ENCODE measurements at regions of chr17 and their contacts with region 1.

Region 1: DNA sequence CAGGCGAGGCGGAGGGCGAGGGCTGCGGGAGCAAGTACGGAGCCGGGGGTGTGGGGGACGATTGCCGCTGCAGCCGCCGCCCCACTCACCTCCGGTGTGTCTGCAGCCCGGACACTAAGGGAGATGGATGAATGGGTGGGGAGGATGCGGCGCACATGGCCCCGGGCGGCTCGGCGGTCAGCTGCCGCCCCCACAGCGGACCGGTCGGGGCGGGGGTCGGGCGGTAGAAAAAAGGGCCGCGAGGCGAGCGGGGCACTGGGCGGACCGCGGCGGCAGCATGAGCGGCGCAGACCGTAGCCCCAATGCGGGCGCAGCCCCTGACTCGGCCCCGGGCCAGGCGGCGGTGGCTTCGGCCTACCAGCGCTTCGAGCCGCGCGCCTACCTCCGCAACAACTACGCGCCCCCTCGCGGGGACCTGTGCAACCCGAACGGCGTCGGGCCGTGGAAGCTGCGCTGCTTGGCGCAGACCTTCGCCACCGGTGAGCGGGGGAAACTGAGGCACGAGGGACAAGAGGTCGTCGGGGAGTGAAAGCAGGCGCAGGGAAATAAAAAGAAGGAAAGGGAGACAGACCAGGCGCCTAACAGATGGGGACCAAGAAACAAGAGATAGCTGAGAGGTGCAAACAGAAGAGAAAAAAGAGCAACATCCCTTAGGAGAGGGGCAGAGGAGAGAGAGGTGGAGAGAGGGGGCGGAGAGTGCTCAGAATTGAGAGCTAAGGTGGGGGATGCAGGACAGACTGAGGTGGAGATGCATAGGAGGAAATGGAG is at the start of gene PNMT:
- DNase-seq: peak; percentile 37 to 84 (median 68)
- ATAC-seq: peak; percentile 79
- H3K4me3 ChIP-seq: peak within 1 kb of the TSS; percentile 29 to 50
- H3K4me3 Mint-ChIP-seq: peak within 1 kb of the TSS; percentile 79
- H3K27ac ChIP-seq: no peak within 1 kb of the TSS
- H3K27ac Mint-ChIP-seq: no peak within 1 kb of the TSS
- H3K4me1 ChIP-seq: peaks cover 26% of the 10 kb centered on the region
- H3K4me1 Mint-ChIP-seq: peaks cover 25% of the 10 kb centered on the region
- H3K27me3 ChIP-seq: peaks cover 0 to 2% of the 10 kb centered on the region in 2 experiments
- H3K27me3 Mint-ChIP-seq: peaks cover 12% of the 10 kb centered on the region
- CTCF ChIP-seq: peak; percentile 72
- total RNA-seq, gene PNMT: 0.43 TPM in 1 of 2 experiments, not detected in the other

Region 2: GRCh38 chr17:39631403-39631802 is 37.0 kb before region 1 on chr17:
- CTCF ChIA-PET with region 1: interaction called, 205 read pairs
- POLR2A ChIA-PET with region 1: interaction called, 3 read pairs
- intact Hi-C with region 1: no loop called
- DNase-seq: no peak
- ATAC-seq: no peak
- H3K4me3 ChIP-seq: no peak overlapping the region
- H3K4me3 Mint-ChIP-seq: no peak overlapping the region
- H3K27ac ChIP-seq: no peak overlapping the region
- H3K27ac Mint-ChIP-seq: no peak overlapping the region
- H3K4me1 ChIP-seq: peaks cover 13% of the 10 kb centered on the region
- H3K4me1 Mint-ChIP-seq: peaks cover 32% of the 10 kb centered on the region
- H3K27me3 ChIP-seq: peaks cover 6 to 15% of the 10 kb centered on the region in 2 experiments
- H3K27me3 Mint-ChIP-seq: peaks cover 26% of the 10 kb centered on the region
- CTCF ChIP-seq: no peak

Region 3: DNA sequence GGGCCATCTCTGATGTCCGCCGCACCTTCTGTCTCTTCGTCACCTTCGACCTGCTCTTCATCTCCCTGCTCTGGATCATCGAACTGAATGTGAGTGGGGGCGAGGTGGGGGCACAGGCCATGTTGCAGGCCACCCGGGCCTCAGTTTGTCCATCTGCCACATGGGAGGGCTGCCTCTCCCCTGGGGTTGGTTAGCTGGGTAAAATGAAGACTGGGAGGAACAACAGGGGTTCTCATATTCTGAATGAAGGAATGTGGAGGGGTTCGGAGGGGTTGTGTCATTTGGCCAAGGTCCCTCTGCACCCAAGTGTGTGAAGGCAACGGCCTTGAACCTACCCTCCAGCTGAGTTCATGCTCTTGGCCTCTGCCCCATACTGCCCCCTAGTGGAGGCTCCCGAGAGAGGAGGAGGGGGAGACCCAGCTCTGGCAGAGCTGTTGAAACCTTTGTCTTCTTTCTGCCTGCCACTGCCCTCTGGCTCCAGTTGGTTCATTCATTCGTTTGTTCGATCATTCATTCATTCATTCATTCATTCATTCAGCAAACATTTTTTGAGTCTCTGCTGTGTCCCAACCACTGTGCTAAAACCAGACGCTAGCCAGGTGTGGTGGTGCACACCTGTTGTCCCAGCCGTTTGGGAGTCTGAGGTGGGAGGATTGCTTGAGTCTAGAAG is 14.6 kb before region 1 on chr17:
- CTCF ChIA-PET with region 1: interaction called, 97 read pairs
- POLR2A ChIA-PET with region 1: interaction called, 9 read pairs
- intact Hi-C with region 1: no loop called
- DNase-seq: peak; percentile 64 to 88 (median 81)
- ATAC-seq: peak; percentile 82
- H3K4me3 ChIP-seq: no peak overlapping the region
- H3K4me3 Mint-ChIP-seq: no peak overlapping the region
- H3K27ac ChIP-seq: no peak overlapping the region
- H3K27ac Mint-ChIP-seq: no peak overlapping the region
- H3K4me1 ChIP-seq: peaks cover 41% of the 10 kb centered on the region
- H3K4me1 Mint-ChIP-seq: peaks cover 60% of the 10 kb centered on the region
- H3K27me3 ChIP-seq: no peaks in the 10 kb centered on the region
- H3K27me3 Mint-ChIP-seq: no peaks in the 10 kb centered on the region
- CTCF ChIP-seq: peak; percentile 83

Region 4: GRCh38 chr17:39687811-39688518 is 19.6 kb after region 1 on chr17 and contains the start of gene PGAP3:
- CTCF ChIA-PET with region 1: interaction called, 13 read pairs
- POLR2A ChIA-PET with region 1: interaction called, 6 read pairs
- intact Hi-C with region 1: no loop called
- DNase-seq: peak; percentile 54 to 92 (median 85)
- ATAC-seq: peak; percentile 93
- H3K4me3 ChIP-seq: peak within 1 kb of the TSS; percentile 68 to 85
- H3K4me3 Mint-ChIP-seq: peak within 1 kb of the TSS; percentile 97
- H3K27ac ChIP-seq: peak within 1 kb of the TSS; percentile 80 to 86
- H3K27ac Mint-ChIP-seq: peak within 1 kb of the TSS; percentile 98
- H3K4me1 ChIP-seq: peaks cover 17% of the 10 kb centered on the region
- H3K4me1 Mint-ChIP-seq: peaks cover 27% of the 10 kb centered on the region
- H3K27me3 ChIP-seq: peaks cover 0 to 2% of the 10 kb centered on the region in 2 experiments
- H3K27me3 Mint-ChIP-seq: no peaks in the 10 kb centered on the region
- CTCF ChIP-seq: no peak
- total RNA-seq, gene PGAP3: 20.9 to 22.6 TPM